ENCODE measurements at regions of chr14 and their contacts with region 1.

Region 1: DNA sequence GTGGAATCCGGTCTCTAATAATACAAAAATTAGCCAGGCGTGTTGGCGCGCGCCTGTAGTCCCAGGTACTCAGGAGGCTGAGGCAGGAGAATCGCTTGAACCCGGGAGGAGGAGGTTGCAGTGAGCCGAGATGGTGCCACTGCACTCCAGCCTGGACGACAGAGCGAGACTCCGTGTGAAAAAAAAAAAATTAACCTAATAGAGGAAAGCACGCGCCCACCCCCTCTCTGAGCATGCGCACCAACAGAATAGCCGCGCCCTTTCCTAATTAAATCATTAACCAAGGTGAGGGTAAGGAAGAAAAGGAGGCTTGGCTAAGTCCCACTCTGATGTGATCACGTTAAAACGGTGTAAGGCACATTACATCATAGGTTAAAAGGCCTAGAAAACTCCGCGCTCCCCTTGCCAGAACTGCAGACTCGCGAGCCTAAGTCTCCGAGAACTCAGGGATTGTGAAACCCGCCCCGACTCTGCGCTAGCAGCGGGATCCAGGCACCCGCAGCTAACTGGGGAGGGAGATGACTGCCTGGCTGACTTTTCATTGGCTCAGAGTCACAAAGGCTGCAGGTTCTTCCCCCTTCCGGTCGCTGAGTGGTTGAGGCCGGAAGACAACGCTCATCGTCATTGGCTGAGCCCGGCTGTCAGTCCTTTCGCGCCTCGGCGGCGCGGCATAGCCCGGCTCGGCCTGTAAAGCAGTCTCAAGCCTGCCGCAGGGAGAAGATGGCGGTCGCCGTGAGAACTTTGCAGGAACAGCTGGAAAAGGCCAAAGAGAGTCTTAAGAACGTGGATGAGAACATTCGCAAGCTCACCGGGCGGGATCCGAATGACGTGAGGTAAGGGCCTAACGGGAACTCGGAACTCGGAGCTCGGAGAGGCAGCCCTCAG is at the start of gene PNN:
- DNase-seq: peak; percentile 100
- H3K4me3 ChIP-seq: peak within 1 kb of the TSS; percentile 75 to 100 (median 87)
- H3K27ac ChIP-seq: peak within 1 kb of the TSS; percentile 91
- H3K4me1 ChIP-seq: peaks cover 13% of the 10 kb centered on the region
- H3K27me3 ChIP-seq: no peaks in the 10 kb centered on the region
- CTCF ChIP-seq: no peak
- total RNA-seq, gene PNN: 12.7 to 68.9 TPM

Region 2: GRCh38 chr14:39114073-39114838 is 60.5 kb before region 1 on chr14 and contains the start of gene GEMIN2:
- CTCF ChIA-PET with region 1: no interaction called
- dilution Hi-C with region 1: no loop called
- in situ Hi-C with region 1: no loop called
- intact Hi-C with region 1: loop called (anchors 1 kb)
- DNase-seq: peak; percentile 94
- H3K4me3 ChIP-seq: peak within 1 kb of the TSS; percentile 64 to 92 (median 79)
- H3K27ac ChIP-seq: peak within 1 kb of the TSS; percentile 78
- H3K4me1 ChIP-seq: peaks cover 5% of the 10 kb centered on the region
- H3K27me3 ChIP-seq: no peaks in the 10 kb centered on the region
- CTCF ChIP-seq: no peak
- total RNA-seq, gene GEMIN2: 15.3 to 18.2 TPM

Region 3: GRCh38 chr14:39219075-39219499 is 44.3 kb after region 1 on chr14:
- CTCF ChIA-PET with region 1: no interaction called
- dilution Hi-C with region 1: no loop called
- in situ Hi-C with region 1: no loop called
- intact Hi-C with region 1: loop called (anchors 5 kb)
- DNase-seq: no peak
- H3K4me3 ChIP-seq: no peak overlapping the region
- H3K27ac ChIP-seq: no peak overlapping the region
- H3K4me1 ChIP-seq: peaks cover 17% of the 10 kb centered on the region
- H3K27me3 ChIP-seq: no peaks in the 10 kb centered on the region
- CTCF ChIP-seq: no peak

Region 4: GRCh38 chr14:39266871-39267591 is 92.2 kb after region 1 on chr14:
- CTCF ChIA-PET with region 1: interaction called, 3 read pairs
- dilution Hi-C with region 1: no loop called
- in situ Hi-C with region 1: loop called (anchors 5 to 10 kb)
- intact Hi-C with region 1: loop called (anchors 1 kb)
- DNase-seq: peak; percentile 88
- H3K4me3 ChIP-seq: peak overlapping the region; percentile 90 to 99 (median 97)
- H3K27ac ChIP-seq: peak overlapping the region; percentile 98
- H3K4me1 ChIP-seq: peaks cover 11% of the 10 kb centered on the region
- H3K27me3 ChIP-seq: no peaks in the 10 kb centered on the region
- CTCF ChIP-seq: no peak

Region 5: DNA sequence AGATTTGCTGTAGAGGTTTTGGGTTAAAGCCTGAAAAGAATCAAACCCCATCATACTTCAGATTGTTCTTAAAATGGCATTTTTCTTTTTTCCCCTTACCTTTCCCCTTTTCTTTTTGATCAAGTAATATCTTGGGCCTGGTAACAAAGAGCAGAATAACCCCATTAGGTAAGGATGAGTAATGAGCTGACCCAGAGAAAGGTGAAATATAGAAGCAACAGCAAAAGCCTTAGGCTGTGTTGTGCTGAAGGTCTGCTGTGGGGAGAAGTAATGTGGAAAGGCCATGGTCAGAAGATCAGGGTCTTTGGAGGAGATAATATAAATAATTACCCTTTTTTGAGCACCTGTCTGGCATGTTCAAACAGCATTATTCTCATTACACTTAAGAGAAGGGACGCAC is 101.2 kb after region 1 on chr14:
- CTCF ChIA-PET with region 1: no interaction called
- dilution Hi-C with region 1: no loop called
- in situ Hi-C with region 1: loop called in 1 of 2 experiments (anchors 10 kb)
- intact Hi-C with region 1: no loop called
- DNase-seq: no peak
- H3K4me3 ChIP-seq: no peak overlapping the region
- H3K27ac ChIP-seq: no peak overlapping the region
- H3K4me1 ChIP-seq: no peaks in the 10 kb centered on the region
- H3K27me3 ChIP-seq: no peaks in the 10 kb centered on the region
- CTCF ChIP-seq: no peak

Region 6: GRCh38 chr14:39432179-39432618 is 257.4 kb after region 1 on chr14 and contains the start of gene FBXO33:
- CTCF ChIA-PET with region 1: no interaction called
- dilution Hi-C with region 1: no loop called
- in situ Hi-C with region 1: no loop called
- intact Hi-C with region 1: loop called (anchors 2 kb)
- DNase-seq: peak; percentile 95
- H3K4me3 ChIP-seq: peak within 1 kb of the TSS; percentile 95 to 98 (median 96)
- H3K27ac ChIP-seq: peak within 1 kb of the TSS; percentile 99
- H3K4me1 ChIP-seq: peaks cover 17% of the 10 kb centered on the region
- H3K27me3 ChIP-seq: no peaks in the 10 kb centered on the region
- CTCF ChIP-seq: no peak
- total RNA-seq, gene FBXO33: 6.0 to 13.2 TPM